ENCODE measurements at regions of chr1 and their contacts with region 1.

Region 1: GRCh38 chr1:180178511-180179161 is 24.0 kb downstream of the QSOX1 start:
- DNase-seq: peak in 1 of 2 experiments; percentile 93
- H3K4me3 ChIP-seq: no peak overlapping the region
- H3K27ac ChIP-seq: no peak overlapping the region
- H3K4me1 ChIP-seq: no peaks in the 10 kb centered on the region
- H3K27me3 ChIP-seq: no peaks in the 10 kb centered on the region
- CTCF ChIP-seq: peak; percentile 77 to 94 (median 83)
- EP300 ChIP-seq: no peak
- POLR2A ChIP-seq: no peak
- RAD21 ChIP-seq: peak; percentile 90 to 91

Region 2: GRCh38 chr1:179984942-179985341 is 193.7 kb before region 1 on chr1:
- CTCF ChIA-PET with region 1: no interaction called
- POLR2A ChIA-PET with region 1: no interaction called
- DNase-seq: no peak
- H3K4me3 ChIP-seq: no peak overlapping the region
- H3K27ac ChIP-seq: no peak overlapping the region
- H3K4me1 ChIP-seq: no peaks in the 10 kb centered on the region
- H3K27me3 ChIP-seq: peaks cover 0 to 1% (median 0%) of the 10 kb centered on the region in 4 experiments; a peak in 1 of 7 replicates
- CTCF ChIP-seq: no peak
- EP300 ChIP-seq: no peak
- POLR2A ChIP-seq: no peak
- RAD21 ChIP-seq: no peak

Region 3: GRCh38 chr1:180085331-180085730 is 93.3 kb before region 1 on chr1:
- CTCF ChIA-PET with region 1: interaction called, 11 read pairs
- POLR2A ChIA-PET with region 1: no interaction called
- DNase-seq: no peak
- H3K4me3 ChIP-seq: no peak overlapping the region
- H3K27ac ChIP-seq: no peak overlapping the region
- H3K4me1 ChIP-seq: no peaks in the 10 kb centered on the region
- H3K27me3 ChIP-seq: no peaks in the 10 kb centered on the region
- CTCF ChIP-seq: no peak
- EP300 ChIP-seq: no peak
- POLR2A ChIP-seq: no peak
- RAD21 ChIP-seq: no peak

Region 4: DNA sequence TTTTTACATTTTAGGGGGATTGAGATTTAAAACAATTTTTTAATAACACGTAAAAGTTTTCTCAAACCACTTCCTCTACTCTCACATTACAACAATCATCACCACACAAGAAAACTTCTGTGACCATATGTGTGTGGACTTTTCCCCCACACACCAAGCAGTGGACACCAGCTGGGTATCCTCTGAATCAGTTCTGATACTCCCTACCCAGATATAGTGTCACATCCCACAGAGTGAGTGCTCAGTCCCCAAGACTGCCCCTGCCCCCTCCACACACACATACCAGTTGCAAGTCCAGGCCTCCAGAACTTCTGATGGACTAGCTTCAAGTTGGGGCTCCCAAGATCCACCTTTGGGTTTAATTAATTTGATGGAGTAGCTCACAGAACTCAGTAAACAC is 77.2 kb before region 1 on chr1:
- CTCF ChIA-PET with region 1: interaction called, 13 read pairs
- POLR2A ChIA-PET with region 1: no interaction called
- DNase-seq: no peak
- H3K4me3 ChIP-seq: no peak overlapping the region
- H3K27ac ChIP-seq: no peak overlapping the region
- H3K4me1 ChIP-seq: no peaks in the 10 kb centered on the region
- H3K27me3 ChIP-seq: no peaks in the 10 kb centered on the region
- CTCF ChIP-seq: no peak
- EP300 ChIP-seq: no peak
- POLR2A ChIP-seq: no peak
- RAD21 ChIP-seq: no peak

Region 5: GRCh38 chr1:180123463-180123936 is 55.1 kb before region 1 on chr1:
- CTCF ChIA-PET with region 1: interaction called, 13 read pairs
- POLR2A ChIA-PET with region 1: no interaction called
- DNase-seq: no peak
- H3K4me3 ChIP-seq: no peak overlapping the region
- H3K27ac ChIP-seq: no peak overlapping the region
- H3K4me1 ChIP-seq: 0 out of 7 replicates have a peak, but pooled peaks cover 0 to 4% (median 0%) of the 10 kb centered on the region in 4 experiments
- H3K27me3 ChIP-seq: no peaks in the 10 kb centered on the region
- CTCF ChIP-seq: no peak
- EP300 ChIP-seq: no peak
- POLR2A ChIP-seq: no peak
- RAD21 ChIP-seq: no peak

Region 6: DNA sequence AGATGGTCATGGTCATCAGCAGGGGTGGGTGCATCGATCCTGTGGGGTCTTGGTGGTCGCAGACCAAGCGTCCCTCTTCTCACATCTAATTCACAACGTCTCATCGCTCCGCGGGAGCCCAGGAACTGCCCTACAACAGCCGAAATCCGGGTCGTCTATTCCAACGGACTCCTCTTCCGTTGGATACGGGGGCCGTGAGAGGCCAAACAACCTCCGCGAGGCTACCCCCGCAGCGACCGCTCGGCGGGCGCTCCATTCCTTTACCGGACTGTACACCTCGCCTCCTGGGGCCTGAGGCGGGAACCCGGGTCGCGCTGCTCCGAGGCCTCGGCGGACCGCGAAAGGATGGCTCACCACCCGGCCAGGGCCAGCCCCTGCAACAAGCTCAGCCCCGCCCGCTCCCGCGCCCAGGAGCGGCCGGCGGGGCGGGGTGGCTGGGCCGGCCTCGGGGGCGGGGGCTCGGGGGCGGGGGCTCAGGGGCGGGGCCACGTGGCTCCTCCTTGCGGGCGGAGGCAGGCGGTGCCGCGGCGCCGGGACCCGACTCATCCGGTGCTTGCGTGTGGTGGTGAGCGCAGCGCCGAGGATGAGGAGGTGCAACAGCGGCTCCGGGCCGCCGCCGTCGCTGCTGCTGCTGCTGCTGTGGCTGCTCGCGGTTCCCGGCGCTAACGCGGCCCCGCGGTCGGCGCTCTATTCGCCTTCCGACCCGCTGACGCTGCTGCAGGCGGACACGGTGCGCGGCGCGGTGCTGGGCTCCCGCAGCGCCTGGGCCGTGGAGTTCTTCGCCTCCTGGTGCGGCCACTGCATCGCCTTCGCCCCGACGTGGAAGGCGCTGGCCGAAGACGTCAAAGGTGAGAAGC is 24.1 kb before region 1 on chr1 and contains the start of gene QSOX1:
- CTCF ChIA-PET with region 1: interaction called, 37 read pairs
- POLR2A ChIA-PET with region 1: interaction called, 3 read pairs
- DNase-seq: peak; percentile 34 to 86
- H3K4me3 ChIP-seq: peak within 1 kb of the TSS; percentile 85 to 97 (median 96)
- H3K27ac ChIP-seq: no peak within 1 kb of the TSS; the same call in 1 of the 2 replicates
- H3K4me1 ChIP-seq: peaks cover 1 to 6% (median 3%) of the 10 kb centered on the region in 4 experiments; a peak in 6 of 7 replicates
- H3K27me3 ChIP-seq: peaks cover 0 to 15% (median 8%) of the 10 kb centered on the region in 4 experiments; a peak in 6 of 7 replicates
- CTCF ChIP-seq: no peak
- EP300 ChIP-seq: no peak
- POLR2A ChIP-seq: peak; percentile 61 to 80
- RAD21 ChIP-seq: peak in 1 of 2 experiments; percentile 2; a peak in 1 of 4 replicates
- total RNA-seq, gene QSOX1: 120 and 123 TPM in 2 replicates

Region 7: GRCh38 chr1:180221462-180221861 is 42.8 kb after region 1 on chr1:
- CTCF ChIA-PET with region 1: interaction called, 149 read pairs
- POLR2A ChIA-PET with region 1: no interaction called
- DNase-seq: no peak
- H3K4me3 ChIP-seq: no peak overlapping the region
- H3K27ac ChIP-seq: no peak overlapping the region
- H3K4me1 ChIP-seq: no peaks in the 10 kb centered on the region
- H3K27me3 ChIP-seq: peaks cover 0 to 6% (median 4%) of the 10 kb centered on the region in 4 experiments; a peak in 4 of 7 replicates
- CTCF ChIP-seq: no peak
- EP300 ChIP-seq: no peak
- POLR2A ChIP-seq: no peak
- RAD21 ChIP-seq: no peak

Region 8: DNA sequence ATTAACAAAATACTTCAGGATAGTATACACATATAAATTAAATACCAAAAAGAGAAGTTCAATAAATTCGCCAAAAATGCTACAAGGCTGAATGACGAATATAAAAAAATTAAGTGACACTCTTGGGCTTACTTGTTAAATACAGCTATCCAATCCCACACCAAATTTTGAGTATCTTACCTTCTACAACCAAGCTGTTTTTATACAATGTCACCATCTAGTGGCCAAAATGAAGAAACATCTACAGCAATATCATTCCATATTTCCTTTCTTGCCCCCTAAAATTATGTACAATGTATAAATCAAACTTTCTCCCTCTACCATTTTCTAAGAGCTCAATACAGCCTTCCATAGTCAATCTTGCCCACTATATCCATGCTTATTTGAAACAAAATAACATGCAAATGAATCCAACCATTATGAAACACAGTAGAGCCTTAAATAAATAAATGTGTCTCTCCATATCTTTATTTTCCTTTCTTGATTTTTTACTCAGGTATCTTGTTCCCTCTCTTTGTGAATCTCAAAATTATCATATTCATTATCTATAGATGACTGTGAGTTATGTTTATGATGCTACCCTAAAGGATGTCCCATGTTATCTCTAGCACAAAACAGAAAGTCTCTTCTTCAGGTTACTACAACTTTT is 237.5 kb after region 1 on chr1:
- CTCF ChIA-PET with region 1: interaction called, 11 read pairs
- POLR2A ChIA-PET with region 1: no interaction called
- DNase-seq: no peak
- H3K4me3 ChIP-seq: no peak overlapping the region
- H3K27ac ChIP-seq: no peak overlapping the region
- H3K4me1 ChIP-seq: no peaks in the 10 kb centered on the region
- H3K27me3 ChIP-seq: no peaks in the 10 kb centered on the region
- CTCF ChIP-seq: peak in 2 of 3 experiments; percentile 39 to 63; a peak in 2 of 4 replicates
- EP300 ChIP-seq: no peak
- POLR2A ChIP-seq: no peak
- RAD21 ChIP-seq: peak; percentile 79 to 84

Measured in H1 (cell line).